CD4-positive, alpha-beta T cell (primary cell): ENCODE measurements at regions of chr10 and their contacts with region 1.

Region 1: DNA sequence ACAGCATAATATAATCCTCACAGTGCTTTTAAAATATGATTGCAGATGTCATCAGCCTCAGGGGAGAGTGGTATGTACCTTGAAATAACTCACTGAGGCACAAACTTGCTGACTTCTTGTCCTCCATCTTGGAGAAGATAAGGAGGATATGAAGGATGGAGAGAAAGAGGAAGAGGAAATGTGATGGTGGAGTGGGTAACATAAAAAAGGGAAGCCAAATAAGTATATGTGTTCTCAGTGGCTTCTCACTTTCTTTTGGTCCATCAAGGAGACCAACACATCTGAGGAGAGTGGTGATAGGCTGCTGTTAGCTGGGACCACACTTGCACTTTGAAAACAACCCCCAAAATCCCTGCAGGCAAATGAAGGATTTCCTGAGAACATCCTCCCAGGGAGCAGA is 21.6 kb upstream of the ZNF37A start:
- DNase-seq: no peak
- ATAC-seq: no peak
- H3K4me3 ChIP-seq: no peak overlapping the region
- H3K4me3 Mint-ChIP-seq: no peak overlapping the region
- H3K27ac ChIP-seq: no peak overlapping the region
- H3K27ac Mint-ChIP-seq: no peak overlapping the region
- H3K4me1 ChIP-seq: no peaks in the 10 kb centered on the region
- H3K4me1 Mint-ChIP-seq: no peaks in the 10 kb centered on the region
- H3K27me3 ChIP-seq: no peaks in the 10 kb centered on the region
- H3K27me3 Mint-ChIP-seq: peaks cover 4% of the 10 kb centered on the region
- CTCF ChIP-seq: no peak

Region 2: GRCh38 chr10:37816290-37816689 is 256.3 kb before region 1 on chr10:
- CTCF ChIA-PET with region 1: no interaction called
- POLR2A ChIA-PET with region 1: no interaction called
- intact Hi-C with region 1: no loop called
- DNase-seq: no peak
- ATAC-seq: no peak
- H3K4me3 ChIP-seq: no peak overlapping the region
- H3K4me3 Mint-ChIP-seq: no peak overlapping the region
- H3K27ac ChIP-seq: no peak overlapping the region
- H3K27ac Mint-ChIP-seq: no peak overlapping the region
- H3K4me1 ChIP-seq: no peaks in the 10 kb centered on the region
- H3K4me1 Mint-ChIP-seq: no peaks in the 10 kb centered on the region
- H3K27me3 ChIP-seq: no peaks in the 10 kb centered on the region
- H3K27me3 Mint-ChIP-seq: no peaks in the 10 kb centered on the region
- CTCF ChIP-seq: no peak

Region 3: DNA sequence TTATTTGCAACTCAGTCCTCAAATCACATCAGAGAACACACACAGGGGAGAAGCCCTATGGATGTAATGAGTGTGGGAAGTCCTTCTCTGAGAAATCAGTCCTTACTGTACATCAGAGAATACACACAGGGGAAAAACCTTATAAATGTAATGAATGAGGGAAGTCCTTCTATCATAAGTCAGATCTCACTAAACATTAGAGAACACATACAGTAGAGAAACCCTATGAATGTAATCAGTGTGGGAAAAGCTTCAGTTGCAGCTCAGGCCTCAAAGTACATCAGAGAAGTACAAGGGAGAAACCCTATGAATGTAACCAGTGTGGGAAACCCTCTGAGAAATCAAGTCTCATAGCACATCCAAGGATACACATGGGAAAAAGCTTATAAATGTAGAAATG is 176.1 kb before region 1 on chr10:
- CTCF ChIA-PET with region 1: no interaction called
- POLR2A ChIA-PET with region 1: no interaction called
- intact Hi-C with region 1: no loop called
- DNase-seq: no peak
- ATAC-seq: no peak
- H3K4me3 ChIP-seq: no peak overlapping the region
- H3K4me3 Mint-ChIP-seq: no peak overlapping the region
- H3K27ac ChIP-seq: no peak overlapping the region
- H3K27ac Mint-ChIP-seq: no peak overlapping the region
- H3K4me1 ChIP-seq: no peaks in the 10 kb centered on the region
- H3K4me1 Mint-ChIP-seq: no peaks in the 10 kb centered on the region
- H3K27me3 ChIP-seq: no peaks in the 10 kb centered on the region
- H3K27me3 Mint-ChIP-seq: no peaks in the 10 kb centered on the region
- CTCF ChIP-seq: no peak

Region 4: DNA sequence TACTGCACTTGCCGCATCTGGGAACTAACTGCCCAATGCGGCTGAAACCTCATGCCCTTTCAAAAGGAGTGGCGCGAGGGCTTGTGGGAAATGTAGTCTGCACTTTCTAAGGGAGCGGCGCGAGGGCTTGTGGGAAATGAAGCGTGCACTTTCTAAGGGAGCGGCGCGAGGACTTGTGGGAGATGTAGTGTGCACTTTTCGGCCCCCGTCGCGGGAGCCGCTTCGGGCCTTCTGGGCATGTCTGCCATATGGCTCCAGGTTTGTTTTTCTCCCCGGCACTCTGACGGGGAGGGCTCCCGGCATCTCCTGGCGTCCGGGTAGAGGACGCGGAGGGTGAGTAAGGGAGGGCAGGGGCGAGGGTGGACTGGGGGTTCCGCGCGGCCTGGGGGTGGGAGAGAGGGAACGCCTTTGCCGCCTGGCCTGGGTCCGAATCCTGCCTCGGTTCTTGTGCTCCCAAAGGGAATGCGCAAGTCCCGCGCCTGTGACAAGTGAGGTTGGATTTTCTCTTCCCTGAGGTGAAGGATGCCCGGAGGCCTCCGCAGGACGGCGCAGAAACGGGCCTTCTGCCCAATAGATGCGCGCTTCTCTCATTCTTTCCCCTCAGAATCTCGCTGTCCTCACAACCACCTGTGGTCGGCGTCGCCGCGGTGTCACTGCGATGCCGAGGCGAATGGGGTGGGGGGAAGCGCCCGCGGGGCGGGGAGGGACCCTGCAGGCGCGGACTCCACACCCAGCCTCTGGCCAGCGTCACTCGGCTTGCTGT is 21.8 kb after region 1 on chr10 and contains the start of gene ZNF37A:
- CTCF ChIA-PET with region 1: no interaction called
- POLR2A ChIA-PET with region 1: no interaction called
- intact Hi-C with region 1: no loop called
- DNase-seq: peak; percentile 74 to 96 (median 87)
- ATAC-seq: peak; percentile 96
- H3K4me3 ChIP-seq: peak within 1 kb of the TSS; percentile 94
- H3K4me3 Mint-ChIP-seq: peak within 1 kb of the TSS; percentile 90
- H3K27ac ChIP-seq: peak within 1 kb of the TSS; percentile 70 to 76
- H3K27ac Mint-ChIP-seq: peak within 1 kb of the TSS; percentile 95
- H3K4me1 ChIP-seq: peaks cover 23% of the 10 kb centered on the region
- H3K4me1 Mint-ChIP-seq: peaks cover 40% of the 10 kb centered on the region
- H3K27me3 ChIP-seq: no peaks in the 10 kb centered on the region
- H3K27me3 Mint-ChIP-seq: no peaks in the 10 kb centered on the region
- CTCF ChIP-seq: no peak
- total RNA-seq, gene ZNF37A: 14.7 to 15.4 TPM

Region 5: GRCh38 chr10:38118072-38118807 is 45.7 kb after region 1 on chr10:
- CTCF ChIA-PET with region 1: no interaction called
- POLR2A ChIA-PET with region 1: no interaction called
- intact Hi-C with region 1: loop called in 1 of 2 experiments (anchors 5 kb)
- DNase-seq: no peak
- ATAC-seq: no peak
- H3K4me3 ChIP-seq: no peak overlapping the region
- H3K4me3 Mint-ChIP-seq: no peak overlapping the region
- H3K27ac ChIP-seq: no peak overlapping the region
- H3K27ac Mint-ChIP-seq: no peak overlapping the region
- H3K4me1 ChIP-seq: no peaks in the 10 kb centered on the region
- H3K4me1 Mint-ChIP-seq: no peaks in the 10 kb centered on the region
- H3K27me3 ChIP-seq: no peaks in the 10 kb centered on the region
- H3K27me3 Mint-ChIP-seq: no peaks in the 10 kb centered on the region
- CTCF ChIP-seq: no peak